CD4-positive, alpha-beta memory T cell (primary cell): ENCODE measurements at regions of chr15 and their contacts with region 1.

Region 1: GRCh38 chr15:92808978-92809879 is 90.9 kb upstream of the CHD2 start:
- DNase-seq: peak; percentile 98 to 100 (median 99)
- H3K4me3 ChIP-seq: peak overlapping the region; percentile 84 to 94
- H3K4me3 Mint-ChIP-seq: peak overlapping the region; percentile 79 to 97 (median 89)
- H3K27ac ChIP-seq: peak overlapping the region; percentile 91
- H3K27ac Mint-ChIP-seq: peak overlapping the region; percentile 92 to 100 (median 95)
- H3K4me1 ChIP-seq: peaks cover 58% of the 10 kb centered on the region
- H3K4me1 Mint-ChIP-seq: peaks cover 27 to 68% (median 43%) of the 10 kb centered on the region in 4 donors
- H3K27me3 ChIP-seq: no peaks in the 10 kb centered on the region
- H3K27me3 Mint-ChIP-seq: no peaks in the 10 kb centered on the region

Region 2: DNA sequence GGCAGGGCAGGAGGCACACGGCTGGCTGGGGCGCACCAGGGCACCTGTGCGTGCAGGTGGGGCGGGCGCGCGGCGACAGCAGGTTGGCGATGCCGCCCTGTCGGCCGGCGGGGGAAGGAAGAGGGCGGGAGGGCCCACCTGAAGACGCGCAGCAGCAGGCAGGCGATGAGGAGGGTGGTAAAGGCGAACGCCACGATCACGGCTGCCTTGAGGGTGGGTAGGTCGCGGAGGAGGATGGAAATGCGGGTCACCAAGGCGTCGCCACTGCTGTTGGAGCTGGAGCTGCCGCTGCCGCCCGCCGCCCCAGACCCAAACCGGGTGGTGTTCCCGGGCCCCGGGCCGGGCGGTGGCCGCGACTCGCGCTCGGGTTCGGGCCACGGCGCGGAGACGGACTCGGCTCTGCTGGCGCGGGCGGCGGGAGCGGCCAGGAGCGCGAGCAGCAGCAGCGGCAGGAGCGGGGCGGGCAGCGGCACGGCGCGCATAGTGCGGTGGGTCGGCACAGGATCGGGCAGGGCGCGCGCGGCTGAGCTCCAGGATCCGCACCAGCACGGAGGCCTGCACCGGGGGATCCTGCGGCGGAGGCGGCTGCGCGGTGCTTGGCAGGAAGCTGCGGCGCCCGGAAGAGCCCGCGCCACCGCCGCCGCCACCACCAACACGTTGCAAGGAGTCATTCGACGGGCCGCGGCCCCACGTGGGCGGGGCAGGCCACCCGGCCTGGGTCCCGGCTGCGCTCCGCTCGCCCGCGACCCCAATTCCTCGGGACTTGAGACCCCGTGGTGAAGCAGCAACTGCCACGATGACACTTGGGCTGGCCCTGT is 153.8 kb before region 1 on chr15 and contains the start of gene FAM174B:
- CTCF ChIA-PET with region 1: no interaction called
- POLR2A ChIA-PET with region 1: no interaction called
- intact Hi-C with region 1: no loop called
- DNase-seq: no peak
- H3K4me3 ChIP-seq: no peak within 1 kb of the TSS
- H3K4me3 Mint-ChIP-seq: peak within 1 kb of the TSS; percentile 54 to 84 (median 68)
- H3K27ac ChIP-seq: no peak within 1 kb of the TSS
- H3K27ac Mint-ChIP-seq: no peak within 1 kb of the TSS
- H3K4me1 ChIP-seq: peaks cover 5% of the 10 kb centered on the region
- H3K4me1 Mint-ChIP-seq: peaks cover 2 to 13% (median 6%) of the 10 kb centered on the region in 4 donors
- H3K27me3 ChIP-seq: no peaks in the 10 kb centered on the region
- H3K27me3 Mint-ChIP-seq: peaks cover 32 to 37% of the 10 kb centered on the region in 2 donors
- total RNA-seq, gene FAM174B: 6.6 to 8.3 TPM

Region 3: DNA sequence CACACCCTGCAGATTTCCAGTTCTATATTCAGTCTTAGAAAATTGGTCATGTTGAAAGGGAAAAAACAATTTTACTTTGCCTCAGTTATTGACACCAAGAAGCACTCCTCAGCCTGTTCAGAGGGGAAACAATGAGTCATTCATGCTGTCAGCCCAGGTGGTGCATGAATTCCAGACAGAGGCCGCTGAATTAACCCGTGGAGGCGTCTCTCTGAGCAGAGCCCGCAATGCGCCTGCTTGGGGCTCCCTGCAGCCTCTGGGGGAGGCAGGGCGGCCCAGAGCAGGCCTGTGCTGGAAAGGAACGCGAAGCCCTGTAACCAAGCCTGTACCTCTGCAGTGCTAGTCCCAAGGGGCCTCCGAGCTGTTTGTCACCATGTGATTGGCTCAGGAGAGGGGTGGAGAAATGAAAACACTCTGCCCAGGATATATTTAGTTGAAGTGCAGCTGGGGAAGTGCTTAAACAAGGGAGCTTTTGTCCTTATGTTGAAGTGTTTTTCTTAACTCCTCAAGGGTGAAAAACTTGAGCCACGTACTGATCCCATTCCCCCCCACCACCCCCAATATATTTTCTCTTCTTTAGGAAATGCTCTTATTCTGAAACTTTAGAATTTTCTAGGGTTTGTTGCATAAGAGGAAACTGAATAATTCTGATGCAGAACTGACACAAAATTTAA is 22.6 kb after region 1 on chr15:
- CTCF ChIA-PET with region 1: interaction called, 50 read pairs
- POLR2A ChIA-PET with region 1: interaction called, 281 read pairs
- intact Hi-C with region 1: loop called (anchors 1 kb)
- DNase-seq: peak; percentile 80 to 98 (median 89)
- H3K4me3 ChIP-seq: peak overlapping the region; percentile 27 to 34
- H3K4me3 Mint-ChIP-seq: peak overlapping the region; percentile 69 to 91 (median 80)
- H3K27ac ChIP-seq: peak overlapping the region; percentile 66
- H3K27ac Mint-ChIP-seq: peak overlapping the region; percentile 93 to 99 (median 95)
- H3K4me1 ChIP-seq: peaks cover 47% of the 10 kb centered on the region
- H3K4me1 Mint-ChIP-seq: peaks cover 29 to 44% (median 38%) of the 10 kb centered on the region in 4 donors
- H3K27me3 ChIP-seq: no peaks in the 10 kb centered on the region
- H3K27me3 Mint-ChIP-seq: peaks cover 0 to 1% of the 10 kb centered on the region in 2 donors

Region 4: DNA sequence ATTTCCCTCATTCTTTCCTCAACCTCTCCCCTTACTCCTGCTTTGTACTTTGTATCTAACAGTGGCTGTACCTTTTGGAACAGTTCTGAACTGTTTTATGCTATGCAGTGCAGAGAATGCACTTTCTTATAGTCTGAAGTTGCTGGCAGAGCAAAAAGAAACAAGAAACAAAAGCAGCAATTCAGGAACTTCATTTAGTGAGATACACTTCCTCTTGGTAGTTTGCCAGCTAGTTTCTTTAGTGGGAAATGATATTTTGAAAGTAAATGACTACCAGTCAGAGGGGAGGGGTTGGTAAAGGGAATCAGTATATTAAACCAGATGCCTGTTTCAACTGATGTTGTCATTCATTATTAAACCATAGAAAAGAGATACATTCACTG is 35.9 kb after region 1 on chr15:
- CTCF ChIA-PET with region 1: interaction called, 5 read pairs
- POLR2A ChIA-PET with region 1: interaction called, 26 read pairs
- intact Hi-C with region 1: loop called (anchors 1 kb)
- DNase-seq: peak in 4 of 5 donors; percentile 57 to 71 (median 66)
- H3K4me3 ChIP-seq: peak overlapping the region; percentile 21 to 25
- H3K4me3 Mint-ChIP-seq: peak overlapping the region; percentile 73 to 94 (median 86)
- H3K27ac ChIP-seq: peak overlapping the region; percentile 44
- H3K27ac Mint-ChIP-seq: peak overlapping the region; percentile 73 to 99 (median 98)
- H3K4me1 ChIP-seq: peaks cover 80% of the 10 kb centered on the region
- H3K4me1 Mint-ChIP-seq: peaks cover 36 to 86% (median 67%) of the 10 kb centered on the region in 4 donors
- H3K27me3 ChIP-seq: no peaks in the 10 kb centered on the region
- H3K27me3 Mint-ChIP-seq: no peaks in the 10 kb centered on the region

Region 5: DNA sequence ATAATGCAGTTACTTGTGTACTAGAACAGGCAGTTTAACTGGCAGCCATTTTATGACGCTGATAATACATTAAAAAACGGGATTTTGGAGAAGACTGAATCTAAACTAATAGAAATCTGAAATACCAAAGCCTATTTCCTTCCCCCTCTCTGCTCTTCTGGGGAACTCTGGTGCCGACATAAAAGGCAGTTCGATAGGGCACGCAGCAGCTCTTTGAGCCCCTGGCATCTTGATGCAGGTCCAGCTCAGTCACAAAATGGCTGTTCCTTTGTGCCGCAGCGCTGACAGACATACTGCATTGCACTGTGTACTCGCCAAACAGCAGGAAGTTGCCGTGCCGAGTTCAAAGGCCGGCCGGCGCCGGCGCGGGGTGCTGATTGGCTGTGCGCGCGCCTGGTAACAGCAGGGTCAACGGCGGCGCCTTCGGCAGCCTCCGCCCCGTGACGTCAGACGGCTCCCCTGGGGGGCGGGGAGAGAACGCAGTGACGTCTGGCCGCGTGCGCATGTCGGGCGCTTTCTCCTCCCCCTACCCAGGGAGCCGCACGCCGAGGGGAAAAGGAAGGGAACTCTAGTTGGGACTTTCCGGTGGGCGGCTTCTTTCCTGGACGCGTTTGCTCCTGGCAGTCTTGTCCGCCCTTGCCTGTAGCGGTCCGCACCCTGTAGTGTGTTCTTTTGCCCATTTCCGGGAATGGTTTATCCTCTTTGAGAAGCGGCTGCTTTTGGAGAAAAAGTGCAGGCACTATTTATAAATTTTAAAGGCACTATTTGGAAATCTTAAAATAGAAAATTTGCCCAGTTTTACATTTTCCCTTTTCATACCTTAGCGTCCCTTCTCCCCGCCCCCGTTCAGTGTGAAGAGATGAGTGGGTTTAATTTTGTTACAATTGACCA is 95.0 kb after region 1 on chr15:
- CTCF ChIA-PET with region 1: interaction called, 33 read pairs
- POLR2A ChIA-PET with region 1: interaction called, 592 read pairs
- intact Hi-C with region 1: loop called (anchors 1 kb)
- DNase-seq: peak; percentile 99
- H3K4me3 ChIP-seq: peak overlapping the region; percentile 67 to 75
- H3K4me3 Mint-ChIP-seq: peak overlapping the region; percentile 94 to 99 (median 98)
- H3K27ac ChIP-seq: peak overlapping the region; percentile 95
- H3K27ac Mint-ChIP-seq: peak overlapping the region; percentile 98 to 100 (median 100)
- H3K4me1 ChIP-seq: peaks cover 71% of the 10 kb centered on the region
- H3K4me1 Mint-ChIP-seq: peaks cover 50 to 78% (median 63%) of the 10 kb centered on the region in 4 donors
- H3K27me3 ChIP-seq: no peaks in the 10 kb centered on the region
- H3K27me3 Mint-ChIP-seq: no peaks in the 10 kb centered on the region

Region 6: DNA sequence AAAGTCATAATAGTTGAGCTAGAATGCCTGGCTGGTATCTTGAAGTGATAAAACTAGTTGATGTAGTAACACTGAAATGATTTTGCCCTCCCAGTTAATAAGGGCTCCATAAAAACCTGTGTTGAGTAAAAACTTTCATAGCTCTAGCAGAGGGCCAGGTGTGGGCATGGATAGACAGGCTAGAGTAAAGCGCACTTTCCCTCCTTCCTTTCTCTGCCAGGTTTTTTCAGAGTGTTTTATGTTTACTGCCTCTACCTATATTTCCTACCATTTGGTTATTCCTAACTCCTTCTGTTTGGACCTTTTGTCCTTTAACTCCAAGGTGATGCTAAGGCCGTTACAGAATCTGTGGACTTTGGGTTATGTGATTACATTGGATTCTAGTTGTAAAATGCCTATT is 116.2 kb after region 1 on chr15:
- CTCF ChIA-PET with region 1: interaction called, 121 read pairs
- POLR2A ChIA-PET with region 1: interaction called, 44 read pairs
- intact Hi-C with region 1: no loop called
- DNase-seq: no peak
- H3K4me3 ChIP-seq: no peak overlapping the region
- H3K4me3 Mint-ChIP-seq: peak overlapping the region in 1 of 8 donors; percentile 22
- H3K27ac ChIP-seq: no peak overlapping the region
- H3K27ac Mint-ChIP-seq: peak overlapping the region in 4 of 7 donors; percentile 20 to 66 (median 47)
- H3K4me1 ChIP-seq: peaks cover 87% of the 10 kb centered on the region
- H3K4me1 Mint-ChIP-seq: peaks cover 58 to 94% (median 74%) of the 10 kb centered on the region in 4 donors
- H3K27me3 ChIP-seq: no peaks in the 10 kb centered on the region
- H3K27me3 Mint-ChIP-seq: no peaks in the 10 kb centered on the region